ENCODE measurements at regions of chr1 and their contacts with region 1.

Region 1: DNA sequence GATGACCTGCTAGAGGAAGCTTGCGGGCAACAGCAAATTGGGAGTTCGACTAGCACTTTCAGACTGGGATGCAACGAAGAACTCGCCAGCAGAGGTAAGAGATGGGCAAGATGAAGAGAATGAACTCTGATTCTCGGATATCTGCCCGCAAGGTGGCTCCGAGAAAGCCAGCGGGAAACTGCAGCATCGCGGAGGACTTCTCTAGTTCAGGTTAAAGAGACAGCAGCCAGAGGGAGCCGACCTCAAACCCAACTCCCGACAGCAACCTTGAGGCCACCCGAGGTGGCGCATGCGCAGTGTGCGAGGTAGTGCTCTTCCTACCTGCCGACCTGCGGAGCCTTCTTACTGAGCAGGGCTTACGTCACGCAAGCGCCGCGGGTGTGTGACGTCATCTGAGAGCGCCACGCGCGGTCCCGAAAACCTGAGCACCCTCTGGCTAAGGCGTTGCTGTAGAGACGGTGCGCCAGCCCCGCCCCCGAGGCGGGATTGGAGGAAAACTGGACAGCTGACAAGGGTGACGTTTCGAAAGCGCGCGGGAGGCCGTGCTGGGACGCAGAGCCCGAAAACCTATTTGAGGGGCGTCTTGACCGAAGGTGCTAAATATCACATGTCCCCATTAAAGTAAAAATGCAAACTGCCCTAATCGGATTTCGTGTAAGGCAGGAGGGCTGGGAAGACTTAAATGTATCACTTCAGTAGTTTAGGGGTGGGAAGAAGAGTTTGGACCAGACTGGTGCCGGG is 110.5 kb upstream of the SLC25A33 start:
- DNase-seq: peak; percentile 100
- H3K4me3 Mint-ChIP-seq: peak overlapping the region; percentile 89
- H3K27ac Mint-ChIP-seq: peak overlapping the region; percentile 94
- H3K4me1 Mint-ChIP-seq: peaks cover 46% of the 10 kb centered on the region
- H3K27me3 Mint-ChIP-seq: peaks cover 11% of the 10 kb centered on the region

Region 2: DNA sequence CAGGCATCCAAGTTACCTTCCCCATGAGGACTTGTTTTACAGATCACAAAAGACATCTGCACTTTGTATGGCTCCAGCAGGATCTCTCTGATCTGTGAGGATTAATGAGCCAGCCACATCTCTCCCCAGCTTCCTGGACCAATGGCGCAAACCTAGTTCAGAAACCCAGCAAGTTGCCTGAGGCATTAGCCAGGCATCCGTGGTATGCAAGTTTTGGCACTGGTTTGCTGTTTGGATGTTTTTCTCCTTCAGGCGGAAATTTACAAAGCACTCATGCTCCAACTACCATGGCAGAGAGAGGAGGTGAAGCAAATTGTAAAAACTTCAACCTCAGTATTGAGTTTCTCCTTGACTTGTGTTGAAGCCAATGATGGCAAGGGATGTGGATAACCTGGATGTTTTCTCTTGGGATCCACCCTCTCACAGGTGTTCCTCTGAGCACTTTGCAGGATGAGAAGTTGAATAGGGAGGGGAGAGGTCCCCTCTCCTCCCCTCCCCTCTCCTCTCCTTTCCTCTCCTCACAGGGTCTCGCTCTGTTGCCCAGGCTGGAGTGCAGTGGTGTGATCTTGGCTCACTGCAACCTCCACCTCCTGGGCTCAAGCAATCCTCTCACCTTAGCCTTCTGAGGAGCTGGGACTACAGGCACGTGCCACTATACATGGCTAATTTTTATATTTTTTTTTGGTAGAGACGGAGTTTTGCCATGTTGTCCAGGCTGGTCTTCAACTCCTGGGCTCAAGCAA is 524.7 kb before region 1 on chr1:
- intact Hi-C with region 1: loop called (anchors 10 kb)
- DNase-seq: no peak
- H3K4me3 Mint-ChIP-seq: no peak overlapping the region
- H3K27ac Mint-ChIP-seq: peak overlapping the region; percentile 80
- H3K4me1 Mint-ChIP-seq: peaks cover 51% of the 10 kb centered on the region
- H3K27me3 Mint-ChIP-seq: no peaks in the 10 kb centered on the region

Region 3: DNA sequence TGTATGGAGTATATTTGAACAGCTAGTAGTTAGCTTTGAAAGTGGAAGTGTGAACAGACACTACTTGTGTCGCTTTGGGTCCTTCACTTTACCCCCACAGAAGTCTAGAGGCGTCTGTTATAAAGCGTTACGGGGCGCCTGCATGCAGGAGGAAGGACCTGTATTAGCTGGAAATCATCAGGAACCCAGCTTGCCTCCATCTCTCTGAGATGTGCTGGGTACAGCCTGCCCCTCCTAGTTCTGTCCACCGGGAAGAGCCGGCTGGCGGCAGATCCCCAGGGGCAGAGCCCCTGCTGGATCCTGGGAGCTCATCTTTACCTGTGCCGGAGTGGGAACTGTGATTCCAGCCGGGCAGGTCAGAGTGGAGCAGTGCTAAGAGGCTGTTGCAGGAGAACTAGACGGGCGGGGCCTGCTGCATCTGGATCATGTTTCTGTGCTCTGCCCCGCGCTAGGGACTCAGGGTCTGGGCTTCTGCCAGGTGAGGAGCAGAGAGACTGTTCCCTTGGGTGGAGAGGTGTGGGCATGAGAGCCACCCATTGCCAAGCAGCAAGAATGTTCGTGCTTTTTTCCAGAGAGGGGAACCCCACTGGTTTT is 158.4 kb before region 1 on chr1:
- intact Hi-C with region 1: no loop called
- DNase-seq: no peak
- H3K4me3 Mint-ChIP-seq: no peak overlapping the region
- H3K27ac Mint-ChIP-seq: no peak overlapping the region
- H3K4me1 Mint-ChIP-seq: peaks cover 12% of the 10 kb centered on the region
- H3K27me3 Mint-ChIP-seq: peaks cover 2% of the 10 kb centered on the region

Region 4: GRCh38 chr1:9292361-9293240 is 136.2 kb before region 1 on chr1 and contains the start of gene SPSB1:
- intact Hi-C with region 1: loop called (anchors 1 kb)
- DNase-seq: peak; percentile 56
- H3K4me3 Mint-ChIP-seq: peak within 1 kb of the TSS; percentile 46
- H3K27ac Mint-ChIP-seq: no peak within 1 kb of the TSS
- H3K4me1 Mint-ChIP-seq: peaks cover 24% of the 10 kb centered on the region
- H3K27me3 Mint-ChIP-seq: no peaks in the 10 kb centered on the region
- total RNA-seq, gene SPSB1: 8.9 and 10.0 TPM in 2 replicates

Region 5: GRCh38 chr1:9413148-9413876 is 15.5 kb before region 1 on chr1:
- intact Hi-C with region 1: loop called (anchors 1 kb)
- DNase-seq: peak; percentile 52
- H3K4me3 Mint-ChIP-seq: peak overlapping the region; percentile 57
- H3K27ac Mint-ChIP-seq: peak overlapping the region; percentile 82
- H3K4me1 Mint-ChIP-seq: peaks cover 50% of the 10 kb centered on the region
- H3K27me3 Mint-ChIP-seq: peaks cover 11% of the 10 kb centered on the region

Region 6: GRCh38 chr1:9455487-9456234 is 26.9 kb after region 1 on chr1:
- intact Hi-C with region 1: no loop called
- DNase-seq: peak; percentile 21
- H3K4me3 Mint-ChIP-seq: no peak overlapping the region
- H3K27ac Mint-ChIP-seq: no peak overlapping the region
- H3K4me1 Mint-ChIP-seq: peaks cover 7% of the 10 kb centered on the region
- H3K27me3 Mint-ChIP-seq: peaks cover 14% of the 10 kb centered on the region

Region 7: DNA sequence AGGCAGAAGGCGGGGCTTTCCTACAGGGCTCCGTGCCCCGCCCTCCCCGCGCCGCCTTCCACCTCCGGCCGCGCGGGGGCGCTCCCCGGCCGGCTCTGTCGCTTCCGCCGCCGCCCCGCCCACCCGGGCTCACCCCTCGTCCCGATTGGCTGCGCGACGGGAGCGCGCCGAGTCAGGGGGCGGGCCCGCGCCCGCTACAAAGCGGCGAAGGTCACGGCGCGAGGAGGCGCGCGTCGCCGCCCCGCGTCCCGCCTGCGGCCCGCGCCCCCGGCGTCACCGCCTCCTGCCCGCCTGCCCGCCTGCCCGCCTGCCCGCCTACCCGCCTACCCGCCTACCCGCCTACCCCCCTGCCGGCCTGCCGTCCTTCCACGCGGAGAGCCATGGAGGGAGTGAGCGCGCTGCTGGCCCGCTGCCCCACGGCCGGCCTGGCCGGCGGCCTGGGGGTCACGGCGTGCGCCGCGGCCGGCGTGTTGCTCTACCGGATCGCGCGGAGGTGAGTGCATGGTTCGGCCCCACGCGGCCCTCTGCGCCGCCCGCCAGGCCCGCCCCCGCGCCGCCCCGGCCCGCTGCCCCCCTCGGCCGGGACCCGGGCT is 159.9 kb after region 1 on chr1 and contains the start of gene TMEM201:
- intact Hi-C with region 1: loop called (anchors 1 kb)
- DNase-seq: peak; percentile 94
- H3K4me3 Mint-ChIP-seq: peak within 1 kb of the TSS; percentile 72
- H3K27ac Mint-ChIP-seq: peak within 1 kb of the TSS; percentile 48
- H3K4me1 Mint-ChIP-seq: peaks cover 30% of the 10 kb centered on the region
- H3K27me3 Mint-ChIP-seq: no peaks in the 10 kb centered on the region
- total RNA-seq, gene TMEM201: 36.7 and 38.7 TPM in 2 replicates

Region 8: GRCh38 chr1:10776190-10776855 is 1347.6 kb after region 1 on chr1:
- intact Hi-C with region 1: no loop called
- DNase-seq: no peak
- H3K4me3 Mint-ChIP-seq: no peak overlapping the region
- H3K27ac Mint-ChIP-seq: no peak overlapping the region
- H3K4me1 Mint-ChIP-seq: no peaks in the 10 kb centered on the region
- H3K27me3 Mint-ChIP-seq: no peaks in the 10 kb centered on the region

Measured in activated T-helper 1 cell treated with anti-CD3 and anti-CD28 coated beads, Interleukin-12 subunit alpha, Interleukin-12 subunit beta, Interleukin-2, Interleukin-4 antibody, amounts not matched to agents 30 ng/mL and 10 ng/mL and 1 ng/mL, durations not matched to agents 14 hours and 24 hours and 36 hours (primary cell).